ENCODE measurements at regions of chr5 and their contacts with region 1.

Region 1: DNA sequence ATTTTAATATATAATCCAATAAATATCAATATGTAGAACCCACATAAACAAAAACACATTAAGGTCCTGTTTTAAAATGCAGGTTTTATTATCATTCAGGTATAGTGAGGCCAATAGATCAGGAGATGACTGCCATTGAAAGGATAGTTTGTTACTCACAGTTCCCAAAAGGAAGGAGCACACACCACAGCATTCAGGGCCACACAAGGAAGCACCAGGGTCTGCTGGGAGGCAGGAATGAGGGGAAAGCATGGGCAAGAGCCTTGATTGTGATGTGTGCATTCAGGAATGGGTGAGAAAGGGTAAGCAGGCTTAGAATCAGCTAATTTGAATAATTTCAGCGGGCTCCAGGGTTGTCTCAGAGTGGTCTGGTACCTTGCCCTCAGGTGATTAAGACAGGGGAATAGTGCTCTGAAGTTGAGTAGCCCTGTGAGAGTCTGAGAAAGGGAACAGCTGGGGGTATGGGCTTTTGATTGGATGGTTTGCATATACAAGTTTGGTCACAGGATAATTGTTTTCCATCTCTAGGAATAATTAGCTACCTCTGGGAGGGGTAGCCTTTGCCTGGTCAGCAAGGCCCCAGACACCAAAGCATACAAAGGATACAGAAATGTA is 19.8 kb upstream of the OTULIN start:
- DNase-seq: no peak
- H3K4me3 ChIP-seq: no peak overlapping the region
- H3K27ac ChIP-seq: no peak overlapping the region
- H3K4me1 ChIP-seq: no peaks in the 10 kb centered on the region
- H3K27me3 ChIP-seq: peaks cover 20 to 30% of the 10 kb centered on the region in 2 experiments
- CTCF ChIP-seq: no peak
- POLR2A ChIP-seq: no peak

Region 2: GRCh38 chr5:14351845-14352712 is 292.7 kb before region 1 on chr5:
- CTCF ChIA-PET with region 1: interaction called, 66 read pairs
- POLR2A ChIA-PET with region 1: no interaction called
- dilution Hi-C with region 1: no loop called
- intact Hi-C with region 1: loop called (anchors 1 kb)
- DNase-seq: peak; percentile 65
- H3K4me3 ChIP-seq: no peak overlapping the region
- H3K27ac ChIP-seq: no peak overlapping the region
- H3K4me1 ChIP-seq: peaks cover 19% of the 10 kb centered on the region
- H3K27me3 ChIP-seq: no peaks in the 10 kb centered on the region
- CTCF ChIP-seq: peak; percentile 96 to 98
- POLR2A ChIP-seq: no peak

Region 3: DNA sequence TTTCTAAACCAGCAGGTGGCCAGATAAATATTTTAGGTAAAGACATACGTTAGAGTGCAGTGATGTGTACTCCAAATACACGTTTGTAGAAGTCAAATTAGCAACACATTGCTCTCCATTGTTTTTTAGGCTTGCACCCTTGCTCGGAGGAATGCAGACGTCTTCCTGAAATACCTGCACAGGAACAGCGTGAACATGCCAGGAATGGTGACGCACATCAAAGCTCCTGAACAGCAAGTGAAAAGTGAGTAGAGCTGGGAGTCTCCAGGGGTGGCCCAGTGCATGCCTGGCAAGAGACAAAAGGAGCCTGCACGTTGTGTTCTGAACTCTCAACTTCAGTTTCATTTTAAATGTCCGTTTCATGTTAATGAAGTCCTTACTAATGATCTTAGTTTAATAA is 270.6 kb before region 1 on chr5:
- CTCF ChIA-PET with region 1: interaction called, 18 read pairs
- POLR2A ChIA-PET with region 1: no interaction called
- dilution Hi-C with region 1: loop called (anchors 25 kb)
- intact Hi-C with region 1: no loop called
- DNase-seq: no peak
- H3K4me3 ChIP-seq: no peak overlapping the region
- H3K27ac ChIP-seq: no peak overlapping the region
- H3K4me1 ChIP-seq: no peaks in the 10 kb centered on the region
- H3K27me3 ChIP-seq: no peaks in the 10 kb centered on the region
- CTCF ChIP-seq: no peak
- POLR2A ChIP-seq: no peak

Region 4: DNA sequence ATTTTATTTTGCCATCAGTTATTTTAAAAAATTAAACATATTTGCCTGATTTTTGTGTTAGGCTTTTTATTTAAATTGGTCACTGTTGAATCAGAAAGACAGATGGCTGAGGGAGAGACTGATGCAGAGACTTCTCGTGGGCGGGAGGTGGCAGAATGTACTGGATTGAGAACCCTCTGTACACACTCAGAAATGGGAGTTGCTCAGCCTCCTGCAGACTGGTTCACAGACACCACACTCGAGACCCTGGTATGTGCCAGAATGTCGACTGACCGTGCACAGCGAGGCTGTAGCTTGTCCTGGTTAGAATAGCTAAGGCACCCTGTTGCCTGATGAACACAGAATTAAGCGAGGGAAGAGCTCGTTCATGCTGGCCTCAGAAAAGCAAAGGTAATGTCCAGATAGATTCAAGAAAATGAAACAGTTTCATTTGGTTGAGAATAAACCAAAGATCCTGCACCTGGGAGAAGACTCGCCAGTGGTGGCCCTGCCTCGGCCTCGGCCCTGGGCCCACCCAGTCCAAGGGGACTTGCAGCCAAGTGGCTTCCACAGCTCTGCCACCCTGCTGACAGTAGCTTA is 134.5 kb before region 1 on chr5:
- CTCF ChIA-PET with region 1: interaction called, 12 read pairs
- POLR2A ChIA-PET with region 1: no interaction called
- dilution Hi-C with region 1: no loop called
- intact Hi-C with region 1: loop called (anchors 5 kb)
- DNase-seq: no peak
- H3K4me3 ChIP-seq: no peak overlapping the region
- H3K27ac ChIP-seq: no peak overlapping the region
- H3K4me1 ChIP-seq: no peaks in the 10 kb centered on the region
- H3K27me3 ChIP-seq: no peaks in the 10 kb centered on the region
- CTCF ChIP-seq: no peak
- POLR2A ChIP-seq: no peak

Region 5: DNA sequence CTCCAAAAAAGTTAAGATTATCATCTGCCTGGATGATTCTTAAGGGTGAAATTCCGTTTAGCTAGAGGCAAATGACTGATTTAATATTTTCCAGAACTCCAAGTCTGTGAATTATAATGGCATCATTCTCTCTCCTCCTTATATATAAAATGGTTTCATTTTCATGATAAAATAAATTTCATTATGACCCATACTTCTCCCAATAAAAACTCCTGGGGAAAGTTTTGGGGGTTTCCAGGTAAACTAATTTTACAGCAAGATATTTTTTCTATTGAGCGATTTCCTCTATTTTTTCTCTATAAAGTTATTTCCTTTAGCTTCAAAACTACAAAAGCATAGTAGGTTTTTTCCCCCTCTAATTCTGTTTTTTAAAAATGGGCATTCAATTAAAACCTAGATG is 12.2 kb after region 1 on chr5:
- CTCF ChIA-PET with region 1: interaction called, 11 read pairs
- POLR2A ChIA-PET with region 1: no interaction called
- dilution Hi-C with region 1: no loop called
- intact Hi-C with region 1: no loop called
- DNase-seq: no peak
- H3K4me3 ChIP-seq: no peak overlapping the region
- H3K27ac ChIP-seq: no peak overlapping the region
- H3K4me1 ChIP-seq: peaks cover 8% of the 10 kb centered on the region
- H3K27me3 ChIP-seq: peaks cover 13% of the 10 kb centered on the region in 2 experiments
- CTCF ChIP-seq: no peak
- POLR2A ChIP-seq: no peak

Region 6: DNA sequence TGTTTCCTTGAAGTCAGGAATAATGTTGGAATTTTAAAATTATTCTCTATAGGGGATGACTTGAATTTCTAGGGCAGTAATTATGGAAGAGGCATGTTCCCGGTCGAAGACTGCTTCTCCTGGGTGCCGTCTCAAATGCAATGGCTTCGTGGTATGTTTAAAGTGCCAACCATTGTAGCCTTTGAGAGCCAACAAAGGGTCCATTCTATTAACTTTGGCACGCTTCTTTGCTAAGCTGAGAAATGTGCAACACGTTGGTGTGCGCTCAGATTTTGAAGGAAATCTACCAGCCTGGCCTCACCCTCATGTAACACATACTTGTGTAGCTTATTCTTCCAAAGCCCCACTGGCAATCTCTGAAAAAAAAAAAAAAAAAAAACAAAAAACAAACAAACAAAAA is 448.1 kb after region 1 on chr5:
- CTCF ChIA-PET with region 1: no interaction called
- POLR2A ChIA-PET with region 1: no interaction called
- dilution Hi-C with region 1: no loop called
- intact Hi-C with region 1: no loop called
- DNase-seq: no peak
- H3K4me3 ChIP-seq: no peak overlapping the region
- H3K27ac ChIP-seq: no peak overlapping the region
- H3K4me1 ChIP-seq: no peaks in the 10 kb centered on the region
- H3K27me3 ChIP-seq: no peaks in the 10 kb centered on the region
- CTCF ChIP-seq: no peak
- POLR2A ChIP-seq: no peak

Measured in endothelial cell of umbilical vein (primary cell).